PC-3 (cell line): ENCODE measurements at regions of chr7 and their contacts with region 1.

Region 1: GRCh38 chr7:114663502-114663901 is 248.9 kb downstream of the FOXP2 start:
- DNase-seq: peak; percentile 52
- ATAC-seq: no peak
- H3K4me3 ChIP-seq: no peak overlapping the region
- H3K27ac ChIP-seq: no peak overlapping the region
- H3K4me1 ChIP-seq: no peaks in the 10 kb centered on the region
- H3K27me3 ChIP-seq: peaks cover 60% of the 10 kb centered on the region
- CTCF ChIP-seq: peak; percentile 47

Region 2: DNA sequence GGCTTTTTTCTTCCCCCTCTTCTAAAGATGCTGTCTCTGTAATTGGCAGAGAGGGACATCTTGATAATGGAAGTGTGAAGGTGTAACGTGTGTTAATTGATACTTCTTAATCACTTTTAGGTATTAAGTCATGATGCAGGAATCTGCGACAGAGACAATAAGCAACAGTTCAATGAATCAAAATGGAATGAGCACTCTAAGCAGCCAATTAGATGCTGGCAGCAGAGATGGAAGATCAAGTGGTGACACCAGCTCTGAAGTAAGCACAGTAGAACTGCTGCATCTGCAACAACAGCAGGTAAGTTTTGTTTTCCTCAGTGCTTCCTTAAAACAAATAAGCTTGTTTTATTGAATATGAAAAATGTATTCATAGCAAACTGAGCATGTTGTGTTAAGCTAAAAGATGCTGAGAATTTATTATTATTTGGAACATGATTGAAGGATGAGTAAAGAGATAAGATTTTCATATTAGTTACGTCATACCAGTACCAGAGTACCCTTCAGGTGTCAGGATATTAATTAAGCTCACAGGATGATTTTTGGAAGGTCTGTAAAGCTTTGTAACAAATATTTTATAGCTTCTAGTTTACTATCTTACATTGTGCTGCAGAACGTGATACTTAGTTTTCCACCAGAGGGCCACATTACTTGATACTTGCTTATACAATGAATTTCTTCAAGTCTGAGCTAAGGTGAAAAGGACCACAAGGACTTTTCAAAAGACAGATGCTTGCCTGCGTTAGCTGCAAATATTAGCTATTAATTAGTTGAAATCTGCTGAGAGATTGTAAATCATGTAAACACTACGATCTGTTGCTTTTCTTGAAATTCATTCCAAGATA is 236.9 kb before region 1 on chr7:
- CTCF ChIA-PET with region 1: interaction called, 14 read pairs
- POLR2A ChIA-PET with region 1: no interaction called
- intact Hi-C with region 1: loop called (anchors 5 kb)
- DNase-seq: peak; percentile 37
- ATAC-seq: peak; percentile 65; the same call in 1 of the 2 replicates
- H3K4me3 ChIP-seq: no peak overlapping the region
- H3K27ac ChIP-seq: no peak overlapping the region
- H3K4me1 ChIP-seq: no peaks in the 10 kb centered on the region
- H3K27me3 ChIP-seq: peaks cover 41% of the 10 kb centered on the region
- CTCF ChIP-seq: peak; percentile 53

Region 3: DNA sequence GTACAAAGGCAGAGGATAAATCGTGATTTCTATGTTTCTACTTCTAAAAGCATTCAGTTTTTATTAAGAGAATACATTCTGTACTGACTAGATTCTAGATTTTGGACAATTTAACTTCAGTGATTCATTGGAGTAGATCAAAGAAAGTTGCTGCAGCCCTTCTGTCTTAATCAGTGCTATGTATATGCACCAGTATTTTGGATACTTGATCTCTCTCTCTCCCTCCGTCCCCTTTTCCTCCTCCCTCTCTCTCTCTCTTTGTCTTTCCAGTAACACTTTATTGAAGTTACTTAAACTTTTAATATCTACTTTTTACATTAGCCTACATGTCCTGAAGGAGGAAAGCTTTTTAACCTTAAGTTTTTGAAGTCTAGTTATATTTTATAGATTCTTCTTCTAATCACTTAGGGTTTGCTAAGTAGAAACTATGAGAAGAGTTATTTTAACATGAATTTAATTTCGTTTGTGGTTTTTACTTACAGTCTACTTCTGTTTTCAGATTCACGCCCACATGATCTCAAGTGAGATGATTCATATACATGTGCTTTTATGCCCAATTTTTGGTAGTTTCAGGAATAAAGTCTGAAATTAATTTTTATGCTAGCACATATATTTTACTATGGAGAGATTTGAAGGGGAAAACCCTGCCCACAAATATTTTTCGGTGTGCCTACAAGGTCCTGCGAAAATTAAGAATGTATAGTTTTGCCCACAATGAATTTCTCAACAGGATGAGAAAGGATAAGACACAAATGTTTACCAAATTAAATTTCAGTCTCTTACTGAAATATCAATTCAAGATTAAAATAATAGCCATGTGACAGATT is 267.5 kb after region 1 on chr7:
- CTCF ChIA-PET with region 1: no interaction called
- POLR2A ChIA-PET with region 1: no interaction called
- intact Hi-C with region 1: no loop called
- DNase-seq: no peak
- ATAC-seq: no peak
- H3K4me3 ChIP-seq: no peak overlapping the region
- H3K27ac ChIP-seq: no peak overlapping the region
- H3K4me1 ChIP-seq: 0 out of 2 replicates have a peak, but pooled peaks cover 11% of the 10 kb centered on the region
- H3K27me3 ChIP-seq: no peaks in the 10 kb centered on the region
- CTCF ChIP-seq: no peak

Region 4: DNA sequence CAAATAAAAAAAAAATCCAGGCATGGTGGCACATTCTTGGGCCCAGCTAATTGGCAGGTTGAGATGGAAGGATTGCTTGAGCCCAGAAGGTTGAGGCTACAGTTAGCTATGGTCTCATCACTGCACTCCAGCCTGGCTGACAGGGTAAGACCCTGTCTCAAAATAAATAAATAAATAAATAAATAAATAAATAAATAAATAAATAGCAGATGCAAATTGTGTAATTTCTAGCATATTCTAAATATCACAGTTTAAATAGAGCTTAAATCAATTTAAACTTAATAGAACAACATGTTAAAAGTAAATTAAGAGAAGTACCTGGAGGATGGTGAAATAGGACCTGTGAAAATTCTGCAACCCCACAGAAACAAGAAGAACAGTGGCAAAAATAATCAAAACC is 1076.5 kb after region 1 on chr7:
- CTCF ChIA-PET with region 1: interaction called, 12 read pairs
- POLR2A ChIA-PET with region 1: no interaction called
- intact Hi-C with region 1: no loop called
- DNase-seq: no peak
- ATAC-seq: no peak
- H3K4me3 ChIP-seq: no peak overlapping the region
- H3K27ac ChIP-seq: no peak overlapping the region
- H3K4me1 ChIP-seq: no peaks in the 10 kb centered on the region
- H3K27me3 ChIP-seq: peaks cover 21% of the 10 kb centered on the region; the same call in 1 of the 2 replicates
- CTCF ChIP-seq: no peak